ENCODE measurements at regions of chr13 and their contacts with region 1.

Region 1: GRCh38 chr13:40764587-40765403 is 6.2 kb downstream of the MRPS31 start:
- DNase-seq: no peak
- H3K4me3 Mint-ChIP-seq: peak overlapping the region; percentile 23
- H3K27ac Mint-ChIP-seq: peak overlapping the region; percentile 88
- H3K4me1 Mint-ChIP-seq: peaks cover 39% of the 10 kb centered on the region
- H3K27me3 Mint-ChIP-seq: no peaks in the 10 kb centered on the region

Region 2: DNA sequence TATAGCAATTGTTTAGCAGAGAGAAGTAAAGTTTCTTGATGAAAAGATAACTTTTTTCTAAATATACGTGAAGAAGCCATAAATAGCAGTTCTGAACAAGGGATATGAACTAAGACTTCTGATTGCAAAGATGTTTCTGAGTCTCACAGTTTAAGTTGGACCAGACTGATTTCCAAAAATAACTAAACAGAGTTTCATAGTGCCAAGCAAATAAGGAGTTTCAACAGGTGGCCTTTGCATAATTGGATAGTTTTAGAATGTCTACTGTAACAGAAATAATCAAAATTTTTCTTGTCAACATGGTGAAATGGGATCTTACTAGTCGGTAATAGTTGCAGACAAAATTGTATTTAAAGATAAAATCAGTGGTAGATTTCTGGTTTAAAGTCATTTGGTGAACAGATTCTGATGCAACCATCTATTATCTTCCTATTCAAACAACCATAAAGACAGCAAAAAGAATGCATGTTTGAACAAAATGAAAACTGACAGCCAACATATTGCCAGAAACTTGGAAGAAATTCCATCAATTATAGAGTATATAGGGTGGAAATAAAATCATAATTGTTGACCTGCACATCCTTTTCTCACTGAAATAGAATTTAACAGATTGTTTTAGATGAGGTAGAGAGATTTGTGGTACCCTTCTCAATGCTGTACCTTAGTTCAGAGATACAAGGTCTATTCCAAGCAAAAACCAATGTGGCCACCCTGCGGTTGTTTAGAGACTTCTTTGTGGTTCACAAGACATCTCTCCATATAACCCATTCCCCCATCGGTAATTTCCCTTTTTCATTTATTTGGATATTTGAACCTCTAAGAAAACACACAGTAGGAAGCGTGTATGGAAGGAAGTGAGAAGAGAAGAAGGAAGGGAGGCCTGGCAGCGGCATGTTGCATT is 834.0 kb before region 1 on chr13:
- intact Hi-C with region 1: loop called (anchors 5 kb)
- DNase-seq: no peak
- H3K4me3 Mint-ChIP-seq: no peak overlapping the region
- H3K27ac Mint-ChIP-seq: no peak overlapping the region
- H3K4me1 Mint-ChIP-seq: peaks cover 26% of the 10 kb centered on the region
- H3K27me3 Mint-ChIP-seq: peaks cover 2% of the 10 kb centered on the region

Region 3: DNA sequence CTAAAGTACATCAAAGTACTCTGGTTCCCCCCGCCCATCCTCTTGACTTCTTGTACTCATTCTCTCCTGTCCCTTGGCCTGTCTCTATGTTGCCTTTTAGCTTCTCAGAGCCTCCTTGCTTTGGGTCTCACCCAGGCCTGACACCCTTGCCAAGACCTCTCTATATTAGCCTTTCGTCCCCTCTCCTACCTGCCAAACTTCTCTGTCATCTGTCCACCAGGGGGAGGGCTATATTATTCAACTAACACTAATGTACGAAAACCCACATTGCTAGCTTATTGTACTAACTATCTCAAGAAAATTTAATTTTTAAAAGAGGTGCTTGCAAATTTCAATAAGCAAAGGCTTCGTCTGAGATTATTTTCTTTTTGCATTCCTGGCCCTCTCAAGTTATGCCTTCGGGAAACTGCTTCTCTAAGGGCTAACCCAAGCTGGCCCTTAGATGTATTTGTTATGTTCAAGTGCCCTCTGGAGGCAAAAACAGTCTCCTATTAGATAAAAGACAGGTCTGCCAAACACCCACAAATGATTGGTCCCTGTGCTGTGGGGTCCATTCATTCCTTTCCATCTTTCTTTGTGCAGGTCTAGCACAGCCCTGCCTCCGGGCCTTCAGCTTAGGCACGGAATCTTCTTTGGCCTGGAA is 12.5 kb after region 1 on chr13:
- intact Hi-C with region 1: loop called (anchors 1 kb)
- DNase-seq: peak; percentile 28
- H3K4me3 Mint-ChIP-seq: peak overlapping the region; percentile 76
- H3K27ac Mint-ChIP-seq: peak overlapping the region; percentile 99
- H3K4me1 Mint-ChIP-seq: peaks cover 33% of the 10 kb centered on the region
- H3K27me3 Mint-ChIP-seq: no peaks in the 10 kb centered on the region

Region 4: GRCh38 chr13:40813661-40814454 is 49.1 kb after region 1 on chr13:
- intact Hi-C with region 1: loop called (anchors 5 kb)
- DNase-seq: no peak
- H3K4me3 Mint-ChIP-seq: no peak overlapping the region
- H3K27ac Mint-ChIP-seq: no peak overlapping the region
- H3K4me1 Mint-ChIP-seq: peaks cover 7% of the 10 kb centered on the region
- H3K27me3 Mint-ChIP-seq: no peaks in the 10 kb centered on the region

Region 5: DNA sequence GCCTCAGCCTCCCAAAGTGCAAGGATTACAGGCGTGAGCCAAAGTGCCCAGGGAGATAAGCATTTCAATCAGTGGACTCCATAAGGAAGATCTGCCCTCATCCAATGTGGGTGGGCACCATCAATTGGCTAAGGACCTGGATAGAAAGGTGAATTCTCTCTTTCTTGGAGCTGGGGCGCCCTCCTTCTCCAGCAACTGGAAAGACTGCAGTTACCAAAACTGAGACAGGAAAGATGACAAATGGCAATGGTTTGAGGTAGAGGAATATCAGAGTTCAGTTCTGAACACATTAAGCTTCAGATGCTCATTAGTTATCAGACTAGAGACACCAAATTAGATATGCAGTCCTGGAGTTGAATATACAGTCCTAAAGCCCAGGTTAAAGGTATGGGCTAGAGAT is 264.8 kb after region 1 on chr13:
- intact Hi-C with region 1: no loop called
- DNase-seq: no peak
- H3K4me3 Mint-ChIP-seq: no peak overlapping the region
- H3K27ac Mint-ChIP-seq: no peak overlapping the region
- H3K4me1 Mint-ChIP-seq: peaks cover 28% of the 10 kb centered on the region
- H3K27me3 Mint-ChIP-seq: no peaks in the 10 kb centered on the region